GM10248 (cell line): ENCODE measurements at regions of chr5 and their contacts with region 1.

Region 1: GRCh38 chr5:83927140-83927733 is 206.6 kb upstream of the HAPLN1 start:
- DNase-seq: peak; percentile 15
- CTCF ChIP-seq: peak; percentile 77

Region 2: DNA sequence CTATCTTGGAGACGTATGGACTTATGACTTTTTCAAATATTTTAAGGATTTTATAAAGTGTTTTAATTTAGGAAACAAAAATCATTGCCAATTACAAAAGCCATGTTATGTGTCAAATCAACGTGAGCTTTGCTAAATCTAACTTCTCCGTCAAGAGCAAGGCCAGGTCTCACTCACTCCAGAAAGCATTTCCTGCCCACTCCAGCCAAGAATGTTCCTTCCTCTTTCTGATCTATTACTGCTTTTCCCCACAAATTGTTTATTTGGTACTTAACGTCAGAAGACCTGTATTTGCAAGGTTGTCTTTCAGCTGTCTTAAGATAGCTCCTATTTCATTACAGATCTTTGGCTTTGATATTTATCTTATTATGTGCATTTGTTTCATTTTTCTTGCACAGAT is 13.0 kb before region 1 on chr5:
- CTCF ChIA-PET with region 1: interaction called, 64 read pairs
- POLR2A ChIA-PET with region 1: no interaction called
- DNase-seq: no peak
- CTCF ChIP-seq: no peak

Region 3: DNA sequence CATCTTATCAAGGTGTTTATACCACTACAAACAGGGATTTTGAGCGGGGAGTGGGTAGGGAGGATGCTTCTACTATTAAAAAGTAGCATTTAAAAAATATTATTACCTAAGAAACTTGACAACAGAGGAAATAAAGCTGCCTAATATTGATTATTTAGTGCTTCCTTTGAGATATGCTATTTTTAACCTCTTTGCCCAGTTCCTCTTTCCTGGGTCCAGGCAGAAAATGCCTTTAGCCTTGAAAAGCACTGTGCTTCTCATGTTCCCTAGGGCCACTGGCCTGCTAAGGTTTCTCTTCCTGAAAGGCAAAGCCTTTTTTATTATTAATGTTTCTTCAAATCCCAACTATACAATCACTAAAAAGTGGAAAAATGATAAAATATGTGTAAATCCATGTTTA is 10.6 kb after region 1 on chr5:
- CTCF ChIA-PET with region 1: interaction called, 12 read pairs
- POLR2A ChIA-PET with region 1: no interaction called
- DNase-seq: no peak
- CTCF ChIP-seq: no peak

Region 4: DNA sequence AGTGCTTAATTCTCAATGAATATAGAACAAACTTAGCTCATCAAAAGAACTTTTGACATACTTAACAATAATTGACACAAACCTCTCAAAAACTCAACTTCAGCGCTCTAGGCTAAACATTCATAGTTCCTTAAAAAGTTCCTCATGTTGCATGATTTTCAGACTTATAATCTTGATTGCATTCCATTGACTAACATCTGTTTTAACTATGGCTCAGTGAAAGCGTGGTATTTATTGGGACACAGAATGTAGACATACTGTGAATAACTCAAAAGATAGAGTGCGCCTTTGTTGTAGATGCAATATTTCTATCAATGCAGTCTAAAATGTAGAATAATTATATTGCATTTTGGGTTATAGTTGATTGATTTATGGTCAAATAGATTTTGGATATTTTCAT is 20.5 kb after region 1 on chr5:
- CTCF ChIA-PET with region 1: interaction called, 18 read pairs
- POLR2A ChIA-PET with region 1: no interaction called
- DNase-seq: no peak
- CTCF ChIP-seq: no peak